Activated T-helper 1 cell treated with anti-CD3 and anti-CD28 coated beads, Interleukin-12 subunit alpha, Interleukin-12 subunit beta, Interleukin-2, Interleukin-4 antibody, amounts not matched to agents 30 ng/mL and 10 ng/mL and 1 ng/mL, durations not matched to agents 14 hours and 24 hours and 36 hours (primary cell): ENCODE measurements at regions of chr20 and their contacts with region 1.

Region 1: DNA sequence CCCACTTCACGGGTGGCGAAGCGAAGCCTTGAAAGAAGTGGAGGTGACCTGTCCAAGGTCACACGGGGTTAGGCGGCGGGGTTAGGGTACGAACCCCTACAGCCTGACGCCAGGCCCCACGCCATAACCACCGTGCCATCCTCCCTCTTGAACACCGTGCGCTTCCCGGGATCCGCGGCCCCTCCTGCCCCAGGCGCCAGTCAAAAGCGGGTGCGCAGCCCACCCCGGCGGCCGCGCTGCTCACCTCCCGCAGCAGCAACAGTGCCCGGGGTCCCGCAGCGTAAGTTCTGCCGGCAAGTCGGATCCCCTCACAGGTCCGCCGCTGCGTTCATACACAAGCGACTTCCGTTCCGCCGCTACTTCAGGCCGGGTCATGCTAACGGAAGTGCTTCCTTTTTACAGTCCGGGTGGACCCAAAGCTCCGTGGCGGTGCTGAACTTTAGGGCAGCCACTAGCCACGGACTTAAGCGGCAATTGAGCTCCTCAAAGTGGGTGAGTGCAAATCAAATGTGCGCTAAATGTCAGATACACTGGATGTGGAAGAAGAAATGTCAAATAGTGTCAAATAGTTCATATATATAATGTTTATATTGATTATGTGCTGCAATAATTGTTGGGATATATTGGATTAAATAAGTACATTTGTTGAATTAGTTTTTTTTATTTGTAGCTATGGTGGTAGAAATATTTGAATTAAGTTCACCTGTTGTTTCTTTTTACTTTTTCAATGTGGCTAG is at the start of gene CDK5RAP1:
- DNase-seq: peak; percentile 80
- H3K4me3 Mint-ChIP-seq: peak within 1 kb of the TSS; percentile 98
- H3K27ac Mint-ChIP-seq: peak within 1 kb of the TSS; percentile 91
- H3K4me1 Mint-ChIP-seq: peaks cover 30% of the 10 kb centered on the region
- H3K27me3 Mint-ChIP-seq: no peaks in the 10 kb centered on the region
- total RNA-seq, gene CDK5RAP1: 46.0 and 49.1 TPM in 2 replicates

Region 2: GRCh38 chr20:32972181-32973076 is 428.9 kb before region 1 on chr20:
- intact Hi-C with region 1: loop called (anchors 5 kb)
- DNase-seq: peak; percentile 76
- H3K4me3 Mint-ChIP-seq: no peak overlapping the region
- H3K27ac Mint-ChIP-seq: peak overlapping the region; percentile 59
- H3K4me1 Mint-ChIP-seq: peaks cover 42% of the 10 kb centered on the region
- H3K27me3 Mint-ChIP-seq: no peaks in the 10 kb centered on the region

Region 3: GRCh38 chr20:33373735-33374605 is 27.4 kb before region 1 on chr20:
- intact Hi-C with region 1: loop called (anchors 2 kb)
- DNase-seq: no peak
- H3K4me3 Mint-ChIP-seq: no peak overlapping the region
- H3K27ac Mint-ChIP-seq: no peak overlapping the region
- H3K4me1 Mint-ChIP-seq: peaks cover 52% of the 10 kb centered on the region
- H3K27me3 Mint-ChIP-seq: no peaks in the 10 kb centered on the region

Region 4: DNA sequence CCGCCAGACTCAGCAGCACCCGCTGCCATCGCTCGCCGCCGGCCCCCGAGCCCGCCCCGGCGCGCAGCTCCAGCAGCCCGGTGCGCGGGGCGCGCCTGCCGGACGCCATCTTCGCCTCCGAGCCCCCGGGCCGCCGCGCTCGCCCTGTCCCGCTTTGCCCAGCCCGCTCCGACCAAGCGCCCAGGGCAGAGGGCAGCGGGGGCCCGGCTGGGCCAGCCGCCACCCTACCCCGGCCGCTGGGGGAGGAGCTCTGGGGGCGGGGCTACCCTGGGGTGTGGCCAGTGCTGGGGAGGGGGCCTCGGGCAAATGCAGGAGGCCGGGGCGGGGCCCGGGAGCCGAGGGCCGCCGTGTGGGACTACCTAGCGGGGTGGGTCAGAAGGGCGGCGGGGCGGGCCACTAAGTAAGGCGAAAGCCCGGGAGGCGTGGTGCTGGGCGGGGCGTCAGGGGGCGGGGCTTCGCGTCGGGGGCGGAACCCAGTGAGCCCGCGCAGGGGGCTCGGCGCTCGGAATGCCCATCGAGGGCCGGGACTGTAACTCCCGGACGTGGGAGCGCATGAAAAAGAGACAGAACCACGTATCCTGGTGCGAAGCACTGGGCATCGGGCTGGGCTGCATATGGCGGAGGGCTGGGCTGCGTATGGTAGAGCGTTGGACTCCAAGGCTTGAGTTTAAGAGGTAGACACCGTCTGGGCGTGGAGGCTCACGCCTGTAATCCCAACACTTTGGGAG is 42.3 kb after region 1 on chr20 and contains the start of gene SNTA1:
- intact Hi-C with region 1: loop called (anchors 1 kb)
- DNase-seq: peak; percentile 82
- H3K4me3 Mint-ChIP-seq: peak within 1 kb of the TSS; percentile 88
- H3K27ac Mint-ChIP-seq: peak within 1 kb of the TSS; percentile 76
- H3K4me1 Mint-ChIP-seq: peaks cover 10% of the 10 kb centered on the region
- H3K27me3 Mint-ChIP-seq: peaks cover 11% of the 10 kb centered on the region
- total RNA-seq, gene SNTA1: 0.76 and 0.91 TPM in 2 replicates